Sigmoid colon (tissue), 7 donors: ENCODE measurements at regions of chr10 and their contacts with region 1.

Region 1: DNA sequence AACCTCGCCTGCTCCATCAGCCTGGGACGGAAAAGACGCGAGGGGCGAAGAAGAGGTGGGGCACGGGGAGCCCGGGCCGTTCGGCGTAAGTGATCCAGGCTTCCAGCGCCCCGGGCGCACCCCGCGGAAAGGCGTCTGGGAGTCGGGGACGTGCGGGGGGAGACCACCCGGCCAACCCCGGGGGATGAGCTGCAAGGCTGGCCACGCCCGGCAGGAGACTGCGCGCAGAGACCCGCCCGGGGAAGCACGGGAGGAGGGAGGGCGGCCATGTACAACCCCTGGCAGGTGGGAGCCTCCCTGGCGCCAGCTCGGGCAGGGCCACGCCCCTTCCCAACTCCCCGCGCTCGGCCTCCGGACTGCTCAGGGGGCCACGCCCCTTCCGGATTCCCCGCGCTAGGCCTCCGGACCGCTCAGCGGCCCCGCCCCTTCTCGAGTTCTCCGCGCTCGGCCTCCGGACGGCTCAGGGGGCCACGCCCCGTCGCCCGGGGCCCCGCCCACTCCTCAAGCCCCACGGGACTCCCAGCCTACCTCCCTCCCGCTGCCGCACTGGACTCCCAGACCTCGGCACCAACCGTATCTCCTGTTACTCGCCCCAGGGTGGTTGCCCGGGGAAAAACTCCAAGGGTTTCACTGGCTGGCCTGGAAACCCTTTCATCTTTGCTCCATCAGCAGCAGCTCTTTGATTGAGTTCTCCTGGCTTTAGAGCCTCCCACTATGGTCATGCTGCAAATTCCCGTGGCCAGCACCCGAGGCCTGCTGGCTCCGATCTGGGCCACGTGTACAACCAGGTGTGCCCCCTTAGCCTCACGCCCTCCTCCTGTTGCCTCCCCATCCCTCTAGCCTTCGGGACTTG is 284.4 kb downstream of the ZEB1 start:
- DNase-seq: peak; percentile 98
- H3K4me3 ChIP-seq: peak overlapping the region; percentile 40 to 74 (median 66)
- H3K27ac ChIP-seq: peak overlapping the region; percentile 86 to 93 (median 90)
- H3K4me1 ChIP-seq: peaks cover 0 to 58% (median 38%) of the 10 kb centered on the region in 4 donors
- H3K27me3 ChIP-seq: no peaks in the 10 kb centered on the region
- CTCF ChIP-seq: no peak
- EP300 ChIP-seq: peak in 1 of 4 donors; percentile 68
- POLR2A ChIP-seq: peak; percentile 36 to 74

Region 2: DNA sequence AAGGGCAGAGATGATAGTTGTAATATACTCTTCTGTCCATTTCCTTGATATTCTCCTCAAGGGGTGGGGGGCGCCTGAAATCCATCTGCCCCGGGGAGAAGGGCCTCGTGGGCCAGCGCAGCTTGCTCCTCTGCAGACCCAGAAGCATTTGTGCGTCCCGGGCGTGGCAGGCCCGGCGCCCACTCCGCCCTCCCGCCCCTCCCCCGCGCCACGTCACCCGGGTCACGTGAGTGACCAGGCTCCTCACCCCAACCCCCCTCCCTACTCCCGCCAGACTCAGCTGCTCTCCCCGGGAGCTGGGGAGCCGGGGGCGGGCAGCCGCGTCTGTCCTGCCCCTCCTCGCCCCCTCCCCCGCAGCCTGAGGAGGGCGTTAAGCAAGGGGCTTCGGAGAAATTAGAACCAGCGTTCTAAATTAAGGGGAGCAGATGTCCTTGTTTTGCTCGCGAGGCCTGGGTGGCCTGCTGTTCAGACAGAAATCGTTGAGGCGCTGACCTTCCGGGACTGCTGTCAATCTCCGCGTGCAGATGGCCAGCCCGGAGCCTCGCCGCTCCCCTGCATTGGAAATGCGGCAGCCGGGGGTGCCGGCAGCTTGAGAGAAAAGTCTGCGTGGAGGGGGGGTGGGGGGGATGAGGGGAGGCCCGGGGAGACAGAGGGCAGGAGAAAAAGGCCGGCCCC is 469.7 kb before region 1 on chr10:
- intact Hi-C with region 1: loop called (anchors 5 kb)
- DNase-seq: peak; percentile 92
- H3K4me3 ChIP-seq: peak overlapping the region; percentile 49 to 56 (median 51)
- H3K27ac ChIP-seq: peak overlapping the region; percentile 85 to 90 (median 87)
- H3K4me1 ChIP-seq: peaks cover 0 to 47% (median 33%) of the 10 kb centered on the region in 4 donors
- H3K27me3 ChIP-seq: no peaks in the 10 kb centered on the region
- CTCF ChIP-seq: no peak
- EP300 ChIP-seq: no peak
- POLR2A ChIP-seq: peak; percentile 60 to 75

Region 3: DNA sequence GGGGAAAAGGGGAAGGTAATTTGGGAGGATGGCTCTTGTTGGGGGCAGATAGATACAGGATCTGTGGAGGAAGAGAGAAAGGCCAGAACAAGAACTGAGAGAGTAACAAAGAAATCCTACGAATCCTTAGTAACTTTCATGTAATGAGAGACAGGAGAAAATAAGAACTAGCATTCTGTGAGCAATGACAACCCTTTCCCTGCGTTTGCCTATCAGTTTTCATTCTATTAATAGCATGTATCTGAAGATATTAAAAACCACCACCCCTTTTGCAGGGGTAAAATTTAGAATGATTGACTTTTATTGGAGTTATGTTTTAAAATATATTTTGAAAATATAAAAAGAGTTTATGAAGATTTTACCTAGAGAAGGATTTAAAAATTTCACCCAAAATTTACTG is 151.7 kb before region 1 on chr10:
- intact Hi-C with region 1: no loop called
- DNase-seq: no peak
- H3K4me3 ChIP-seq: no peak overlapping the region
- H3K27ac ChIP-seq: no peak overlapping the region
- H3K4me1 ChIP-seq: peaks cover 0 to 19% (median 7%) of the 10 kb centered on the region in 4 donors
- H3K27me3 ChIP-seq: no peaks in the 10 kb centered on the region
- CTCF ChIP-seq: no peak
- EP300 ChIP-seq: no peak
- POLR2A ChIP-seq: no peak

Region 4: GRCh38 chr10:31536302-31536701 is 67.2 kb before region 1 on chr10:
- intact Hi-C with region 1: loop called (anchors 5 kb)
- DNase-seq: no peak
- H3K4me3 ChIP-seq: no peak overlapping the region
- H3K27ac ChIP-seq: peak overlapping the region in 2 of 4 donors; percentile 9 to 44
- H3K4me1 ChIP-seq: peaks cover 0 to 10% (median 5%) of the 10 kb centered on the region in 4 donors
- H3K27me3 ChIP-seq: no peaks in the 10 kb centered on the region
- CTCF ChIP-seq: no peak
- EP300 ChIP-seq: no peak
- POLR2A ChIP-seq: no peak

Region 5: GRCh38 chr10:31759799-31760626 is 156.6 kb after region 1 on chr10:
- intact Hi-C with region 1: loop called (anchors 5 kb)
- DNase-seq: peak; percentile 99
- H3K4me3 ChIP-seq: peak overlapping the region; percentile 56 to 96 (median 80)
- H3K27ac ChIP-seq: peak overlapping the region; percentile 93 to 99 (median 94)
- H3K4me1 ChIP-seq: peaks cover 0 to 49% (median 36%) of the 10 kb centered on the region in 4 donors
- H3K27me3 ChIP-seq: no peaks in the 10 kb centered on the region
- CTCF ChIP-seq: no peak
- EP300 ChIP-seq: no peak
- POLR2A ChIP-seq: peak; percentile 91 to 92